ENCODE measurements at regions of chr20 and their contacts with region 1.

Region 1: GRCh38 chr20:45771182-45771759 is 20.4 kb downstream of the WFDC3 start:
- DNase-seq: peak; percentile 89
- H3K4me3 ChIP-seq: no peak overlapping the region
- H3K27ac ChIP-seq: no peak overlapping the region
- H3K4me1 ChIP-seq: no peaks in the 10 kb centered on the region
- H3K27me3 ChIP-seq: no peaks in the 10 kb centered on the region
- CTCF ChIP-seq: peak; percentile 96

Region 2: GRCh38 chr20:45320948-45321595 is 450.2 kb before region 1 on chr20:
- CTCF ChIA-PET with region 1: interaction called, 4 read pairs
- POLR2A ChIA-PET with region 1: no interaction called
- intact Hi-C with region 1: loop called (anchors 5 kb)
- DNase-seq: no peak
- H3K4me3 ChIP-seq: no peak overlapping the region
- H3K27ac ChIP-seq: no peak overlapping the region
- H3K4me1 ChIP-seq: peaks cover 16% of the 10 kb centered on the region
- H3K27me3 ChIP-seq: peaks cover 4% of the 10 kb centered on the region
- CTCF ChIP-seq: no peak

Region 3: GRCh38 chr20:45450097-45450818 is 321.0 kb before region 1 on chr20:
- CTCF ChIA-PET with region 1: no interaction called
- POLR2A ChIA-PET with region 1: no interaction called
- intact Hi-C with region 1: loop called (anchors 10 kb)
- DNase-seq: peak; percentile 73
- H3K4me3 ChIP-seq: no peak overlapping the region
- H3K27ac ChIP-seq: no peak overlapping the region
- H3K4me1 ChIP-seq: no peaks in the 10 kb centered on the region
- H3K27me3 ChIP-seq: no peaks in the 10 kb centered on the region
- CTCF ChIP-seq: peak; percentile 79

Region 4: DNA sequence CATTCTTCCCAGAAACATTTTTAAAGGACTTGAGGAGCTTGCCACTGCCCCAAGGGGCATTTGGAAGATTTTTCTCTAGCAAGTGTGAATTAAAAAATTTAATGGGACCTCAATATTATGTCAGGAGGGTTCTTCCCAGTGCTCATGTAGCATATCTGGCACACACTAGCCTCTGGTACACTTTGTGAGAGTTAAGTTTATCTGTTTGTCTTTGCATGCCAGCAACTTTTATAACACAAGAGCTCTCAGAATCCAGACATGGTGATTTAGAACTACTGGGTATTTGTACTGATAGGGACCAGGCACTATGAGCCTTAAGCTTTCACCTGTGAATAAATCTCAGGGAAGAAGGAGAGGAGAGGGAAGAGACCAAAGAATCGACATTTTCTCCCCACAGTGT is 268.7 kb before region 1 on chr20:
- CTCF ChIA-PET with region 1: interaction called, 11 read pairs
- POLR2A ChIA-PET with region 1: no interaction called
- intact Hi-C with region 1: no loop called
- DNase-seq: no peak
- H3K4me3 ChIP-seq: no peak overlapping the region
- H3K27ac ChIP-seq: no peak overlapping the region
- H3K4me1 ChIP-seq: no peaks in the 10 kb centered on the region
- H3K27me3 ChIP-seq: peaks cover 41% of the 10 kb centered on the region
- CTCF ChIP-seq: no peak

Region 5: GRCh38 chr20:45545754-45546453 is 225.4 kb before region 1 on chr20:
- CTCF ChIA-PET with region 1: interaction called, 4 read pairs
- POLR2A ChIA-PET with region 1: no interaction called
- intact Hi-C with region 1: loop called (anchors 2 kb)
- DNase-seq: peak; percentile 28
- H3K4me3 ChIP-seq: no peak overlapping the region
- H3K27ac ChIP-seq: no peak overlapping the region
- H3K4me1 ChIP-seq: no peaks in the 10 kb centered on the region
- H3K27me3 ChIP-seq: peaks cover 47% of the 10 kb centered on the region
- CTCF ChIP-seq: peak; percentile 43

Region 6: DNA sequence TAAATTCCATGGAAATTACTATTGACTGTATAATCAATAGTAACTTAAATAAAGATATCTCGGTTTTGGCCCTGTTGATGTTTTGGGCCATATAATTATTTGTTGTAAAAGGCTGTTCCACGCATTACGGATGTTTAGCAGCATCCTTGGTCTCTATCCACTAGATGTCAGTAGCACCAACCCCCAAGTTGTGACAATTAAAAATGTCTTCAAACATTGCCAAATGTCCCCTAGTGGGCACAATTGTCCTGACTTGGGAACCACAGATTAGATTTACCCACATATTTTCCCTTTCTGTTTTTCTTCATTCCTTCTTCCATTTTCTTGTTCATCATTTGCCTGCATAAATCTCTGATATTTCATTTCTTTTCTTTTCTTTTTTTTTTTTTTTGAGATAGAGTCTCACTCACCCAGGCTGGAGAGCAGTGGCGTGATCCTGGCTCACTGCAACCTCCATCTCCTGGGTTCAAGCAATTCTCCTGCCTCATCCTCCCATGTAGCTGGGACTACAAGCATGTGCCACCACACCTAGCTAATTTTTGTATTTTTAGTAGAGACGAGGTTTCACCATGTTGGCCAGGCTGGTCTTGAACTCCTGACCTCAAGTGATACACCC is 178.6 kb before region 1 on chr20:
- CTCF ChIA-PET with region 1: interaction called, 6 read pairs
- POLR2A ChIA-PET with region 1: no interaction called
- intact Hi-C with region 1: loop called (anchors 2 kb)
- DNase-seq: peak; percentile 82
- H3K4me3 ChIP-seq: no peak overlapping the region
- H3K27ac ChIP-seq: no peak overlapping the region
- H3K4me1 ChIP-seq: no peaks in the 10 kb centered on the region
- H3K27me3 ChIP-seq: peaks cover 18% of the 10 kb centered on the region
- CTCF ChIP-seq: peak; percentile 88

Region 7: DNA sequence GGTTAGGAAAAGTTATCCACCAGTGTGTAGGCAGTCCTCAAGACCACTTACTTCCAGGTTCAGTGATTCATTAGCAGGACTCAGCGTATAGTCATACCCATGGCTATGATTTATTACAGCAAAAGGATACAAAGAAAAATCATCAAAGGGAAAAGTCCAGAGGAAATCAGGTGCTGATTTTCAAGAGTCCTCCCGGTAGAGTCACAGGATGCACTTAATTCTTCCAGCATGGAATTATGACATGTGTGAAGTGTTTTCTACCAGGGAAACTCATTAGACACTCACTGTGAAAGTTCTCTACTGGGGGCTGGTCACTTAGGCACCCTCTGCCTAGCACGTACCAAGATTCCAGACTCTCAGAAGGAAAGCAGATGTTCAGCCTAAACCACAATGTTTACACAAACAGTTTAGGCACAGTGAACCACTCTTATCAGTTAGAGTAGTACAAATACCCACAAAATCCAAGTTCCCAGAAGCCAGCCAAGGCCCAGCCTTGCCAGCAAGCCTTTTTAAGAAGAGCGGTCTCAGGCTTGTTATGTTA is 10.2 kb after region 1 on chr20:
- CTCF ChIA-PET with region 1: no interaction called
- POLR2A ChIA-PET with region 1: no interaction called
- intact Hi-C with region 1: no loop called
- DNase-seq: no peak
- H3K4me3 ChIP-seq: no peak overlapping the region
- H3K27ac ChIP-seq: no peak overlapping the region
- H3K4me1 ChIP-seq: no peaks in the 10 kb centered on the region
- H3K27me3 ChIP-seq: no peaks in the 10 kb centered on the region
- CTCF ChIP-seq: no peak